ENCODE measurements at regions of chr9 and their contacts with region 1.

Region 1: GRCh38 chr9:37309136-37309535 is 113.4 kb upstream of the GRHPR start:
- DNase-seq: no peak
- H3K4me3 ChIP-seq: no peak overlapping the region
- H3K27ac ChIP-seq: no peak overlapping the region
- H3K4me1 ChIP-seq: no peaks in the 10 kb centered on the region
- H3K27me3 ChIP-seq: no peaks in the 10 kb centered on the region
- CTCF ChIP-seq: no peak
- EP300 ChIP-seq: no peak
- POLR2A ChIP-seq: no peak

Region 2: DNA sequence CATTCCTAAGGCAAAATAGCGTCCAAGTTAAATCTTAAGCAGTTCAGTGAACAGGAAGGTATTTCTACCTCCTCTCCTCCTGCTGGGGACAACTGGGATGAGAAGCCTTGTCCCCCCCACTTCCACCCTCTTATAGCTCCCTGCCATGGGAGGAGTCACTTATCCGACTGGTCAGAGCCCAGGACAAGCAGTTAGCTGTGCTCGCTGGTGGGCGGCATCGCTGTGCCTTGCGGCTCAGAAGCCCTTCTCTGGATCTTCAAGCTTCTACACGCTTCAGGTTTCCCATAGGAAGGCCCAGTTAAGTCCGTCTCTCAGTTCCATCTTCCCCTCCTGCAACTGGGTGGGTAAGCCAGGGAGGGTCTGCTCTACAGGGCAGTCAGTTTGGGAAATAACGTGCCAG is 352.2 kb before region 1 on chr9:
- intact Hi-C with region 1: no loop called
- DNase-seq: no peak
- H3K4me3 ChIP-seq: no peak overlapping the region
- H3K27ac ChIP-seq: no peak overlapping the region
- H3K4me1 ChIP-seq: no peaks in the 10 kb centered on the region
- H3K27me3 ChIP-seq: no peaks in the 10 kb centered on the region
- CTCF ChIP-seq: no peak
- EP300 ChIP-seq: no peak
- POLR2A ChIP-seq: no peak

Region 3: GRCh38 chr9:37382161-37382981 is 73.2 kb after region 1 on chr9:
- intact Hi-C with region 1: loop called in 1 of 4 experiments (anchors 10 kb)
- DNase-seq: no peak
- H3K4me3 ChIP-seq: no peak overlapping the region
- H3K27ac ChIP-seq: no peak overlapping the region
- H3K4me1 ChIP-seq: no peaks in the 10 kb centered on the region
- H3K27me3 ChIP-seq: no peaks in the 10 kb centered on the region
- CTCF ChIP-seq: no peak
- EP300 ChIP-seq: no peak
- POLR2A ChIP-seq: no peak